Activated CD4-positive, alpha-beta memory T cell treated with anti-CD3 and anti-CD28 coated beads for 36 hours (primary cell): ENCODE measurements at regions of chr1 and their contacts with region 1.

Region 1: DNA sequence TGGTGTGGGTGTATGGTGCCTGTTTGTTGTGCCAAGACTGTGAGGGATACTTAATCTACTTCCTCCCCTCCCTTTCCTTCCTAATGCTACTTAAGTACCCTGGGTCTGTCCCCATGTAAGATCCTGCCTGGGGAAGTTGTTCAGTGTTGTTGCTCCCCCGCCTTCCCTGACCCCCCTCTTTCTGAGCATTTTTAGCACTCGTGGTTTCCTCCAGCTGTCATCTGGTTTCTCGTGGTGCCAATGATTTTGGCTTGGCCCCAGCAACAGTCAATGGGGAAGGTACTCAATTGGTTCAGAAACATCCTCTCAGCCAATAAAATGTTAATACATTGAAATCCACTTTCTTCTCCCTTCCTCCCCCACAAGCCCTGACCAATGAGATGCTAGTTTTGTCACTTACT is 8.0 kb upstream of the B4GALT3 start:
- DNase-seq: peak; percentile 89
- H3K4me3 Mint-ChIP-seq: peak overlapping the region; percentile 49
- H3K27ac Mint-ChIP-seq: peak overlapping the region; percentile 95
- H3K4me1 Mint-ChIP-seq: peaks cover 81% of the 10 kb centered on the region
- H3K27me3 Mint-ChIP-seq: no peaks in the 10 kb centered on the region

Region 2: DNA sequence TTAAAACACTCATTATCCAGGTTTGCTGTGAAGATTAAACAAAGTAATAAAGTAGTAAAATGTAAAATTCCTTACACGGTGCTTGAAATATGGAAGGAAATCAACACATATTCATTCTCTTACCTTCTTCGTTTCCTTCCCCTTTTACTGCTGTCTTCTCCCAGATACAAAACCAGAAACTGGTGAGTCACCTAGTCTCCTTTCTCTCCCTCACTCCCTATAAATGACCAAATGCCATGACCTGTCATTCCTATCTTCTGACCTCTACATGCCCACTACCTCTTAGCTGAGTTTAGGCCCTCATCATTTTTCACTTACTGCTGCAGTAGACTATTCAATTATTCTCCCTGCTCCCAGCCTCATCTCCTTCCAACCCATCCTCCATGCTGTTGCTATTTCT is 57.0 kb after region 1 on chr1:
- CTCF ChIA-PET with region 1: no interaction called
- POLR2A ChIA-PET with region 1: no interaction called
- intact Hi-C with region 1: no loop called
- DNase-seq: no peak
- H3K4me3 Mint-ChIP-seq: no peak overlapping the region
- H3K27ac Mint-ChIP-seq: no peak overlapping the region
- H3K4me1 Mint-ChIP-seq: no peaks in the 10 kb centered on the region
- H3K27me3 Mint-ChIP-seq: no peaks in the 10 kb centered on the region

Region 3: DNA sequence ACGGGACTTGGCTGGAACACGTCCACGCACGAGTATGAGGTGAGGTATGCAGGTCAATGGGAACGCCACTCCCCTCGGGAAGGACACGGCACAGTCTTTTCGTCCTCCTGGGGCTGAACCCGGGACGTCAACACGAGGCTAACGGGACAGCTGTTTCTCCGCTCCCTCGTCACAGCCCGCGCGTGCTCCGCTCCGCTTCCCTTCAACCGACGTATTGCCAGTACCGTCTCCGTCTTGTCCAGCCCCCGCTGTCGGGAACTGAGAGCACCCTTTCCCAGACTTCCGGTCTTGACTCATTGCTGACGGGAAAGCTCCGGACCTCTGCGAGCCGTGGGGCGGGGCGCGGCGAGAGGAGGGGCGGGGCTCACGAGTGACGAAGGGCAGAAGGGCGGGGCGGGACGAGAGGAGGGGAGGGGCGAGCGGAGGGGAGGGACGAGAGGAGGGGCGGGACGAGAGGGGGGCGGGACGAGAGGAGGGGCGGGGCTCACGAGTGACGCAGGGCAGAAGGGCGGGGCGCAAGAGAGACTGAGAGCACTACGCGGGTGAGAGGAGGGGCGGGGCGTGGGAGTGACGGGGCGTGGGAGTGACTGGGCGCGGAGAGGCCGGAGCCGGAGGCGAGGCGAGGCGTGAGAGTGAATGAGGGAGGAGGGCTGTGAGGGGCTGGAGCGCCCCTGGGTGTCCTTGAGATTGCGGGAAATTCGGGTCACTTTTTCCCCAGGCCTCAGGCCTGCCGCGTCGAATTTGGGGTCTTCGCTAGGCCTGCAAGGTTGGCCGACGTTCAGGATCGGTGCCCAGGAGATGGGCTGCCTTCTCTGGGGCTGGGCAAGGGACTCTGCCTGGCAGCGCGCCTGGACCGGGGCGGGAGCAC is 204.6 kb after region 1 on chr1:
- CTCF ChIA-PET with region 1: interaction called, 9 read pairs
- POLR2A ChIA-PET with region 1: no interaction called
- intact Hi-C with region 1: loop called (anchors 2 kb)
- DNase-seq: peak; percentile 95
- H3K4me3 Mint-ChIP-seq: peak overlapping the region; percentile 93
- H3K27ac Mint-ChIP-seq: peak overlapping the region; percentile 96
- H3K4me1 Mint-ChIP-seq: peaks cover 45% of the 10 kb centered on the region
- H3K27me3 Mint-ChIP-seq: no peaks in the 10 kb centered on the region